ENCODE measurements at regions of chr3 and their contacts with region 1.

Region 1: GRCh38 chr3:78659386-78659987 is 1108.3 kb downstream of the ROBO1 start:
- DNase-seq: no peak
- ATAC-seq: no peak

Region 2: DNA sequence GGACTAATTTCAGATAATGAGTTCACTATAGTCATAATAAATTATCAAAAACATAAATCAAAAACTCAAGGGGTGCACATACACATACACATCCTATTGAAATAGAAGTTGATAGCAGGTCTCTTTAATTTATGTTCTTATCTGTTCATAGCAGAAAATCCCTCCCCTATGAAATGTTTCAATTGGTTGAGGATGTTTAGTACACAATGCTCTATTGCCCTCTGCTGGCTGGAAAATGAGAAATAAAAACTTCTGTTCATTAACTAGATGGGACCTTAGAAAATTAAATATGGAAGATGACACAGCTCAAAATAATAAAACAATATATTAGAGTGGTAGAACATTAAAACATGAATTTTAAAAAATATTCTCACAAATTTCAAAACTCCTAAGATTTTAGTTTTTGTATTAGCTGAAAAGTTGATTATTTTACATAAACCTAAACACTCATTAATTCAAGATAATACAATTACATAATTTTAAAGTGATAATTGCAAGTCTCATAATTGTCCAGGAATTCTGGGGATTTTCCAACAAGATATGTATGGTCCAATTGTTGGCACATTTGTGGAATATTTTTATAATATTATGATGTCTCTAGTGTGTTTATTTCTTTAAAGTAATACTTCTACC is 373.3 kb after region 1 on chr3:
- intact Hi-C with region 1: loop called (anchors 2 to 10 kb)
- DNase-seq: no peak
- ATAC-seq: peak in 1 of 2 donors; percentile 41

Region 3: GRCh38 chr3:79497447-79498111 is 838.1 kb after region 1 on chr3:
- intact Hi-C with region 1: loop called in 1 of 2 experiments (anchors 5 kb)
- DNase-seq: no peak
- ATAC-seq: no peak

Region 4: GRCh38 chr3:79521238-79521848 is 861.9 kb after region 1 on chr3:
- intact Hi-C with region 1: loop called in 1 of 2 experiments (anchors 5 kb)
- DNase-seq: no peak
- ATAC-seq: no peak